ENCODE measurements at regions of chr9 and their contacts with region 1.

Region 1: GRCh38 chr9:4297151-4297785 is 2.6 kb downstream of the GLIS3 start:
- DNase-seq: peak; percentile 80
- H3K4me3 Mint-ChIP-seq: peak overlapping the region; percentile 86
- H3K27ac Mint-ChIP-seq: peak overlapping the region; percentile 86
- H3K4me1 Mint-ChIP-seq: peaks cover 42% of the 10 kb centered on the region
- H3K27me3 Mint-ChIP-seq: peaks cover 7% of the 10 kb centered on the region

Region 2: GRCh38 chr9:2849941-2850340 is 1447.3 kb before region 1 on chr9:
- CTCF ChIA-PET with region 1: no interaction called
- intact Hi-C with region 1: loop called (anchors 2 kb)
- DNase-seq: no peak
- H3K4me3 Mint-ChIP-seq: no peak overlapping the region
- H3K27ac Mint-ChIP-seq: no peak overlapping the region
- H3K4me1 Mint-ChIP-seq: peaks cover 9% of the 10 kb centered on the region
- H3K27me3 Mint-ChIP-seq: peaks cover 5% of the 10 kb centered on the region

Region 3: DNA sequence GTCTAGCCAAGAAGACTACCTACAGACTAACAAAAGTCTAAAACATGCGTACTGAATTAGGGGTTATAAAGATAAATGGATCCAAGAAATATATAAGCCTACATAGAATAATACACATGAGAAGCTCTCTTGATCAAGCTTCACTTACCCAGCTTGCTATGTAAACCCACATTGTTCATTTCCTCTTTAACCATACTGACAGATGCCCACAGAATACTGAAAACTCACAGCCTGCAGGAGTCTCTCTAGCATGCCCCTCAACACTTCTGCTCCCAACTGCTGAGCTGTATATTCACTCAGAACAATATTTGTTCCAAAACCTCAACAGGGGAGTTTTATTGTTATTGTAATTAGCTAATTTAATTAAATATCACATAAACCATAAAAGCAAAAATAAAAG is 823.9 kb before region 1 on chr9:
- CTCF ChIA-PET with region 1: no interaction called
- intact Hi-C with region 1: loop called (anchors 1 kb)
- DNase-seq: no peak
- H3K4me3 Mint-ChIP-seq: no peak overlapping the region
- H3K27ac Mint-ChIP-seq: no peak overlapping the region
- H3K4me1 Mint-ChIP-seq: peaks cover 51% of the 10 kb centered on the region
- H3K27me3 Mint-ChIP-seq: no peaks in the 10 kb centered on the region

Region 4: GRCh38 chr9:4243113-4243512 is 54.2 kb before region 1 on chr9:
- CTCF ChIA-PET with region 1: no interaction called
- intact Hi-C with region 1: loop called (anchors 2 kb)
- DNase-seq: peak; percentile 20
- H3K4me3 Mint-ChIP-seq: no peak overlapping the region
- H3K27ac Mint-ChIP-seq: peak overlapping the region; percentile 26
- H3K4me1 Mint-ChIP-seq: peaks cover 23% of the 10 kb centered on the region
- H3K27me3 Mint-ChIP-seq: no peaks in the 10 kb centered on the region

Region 5: GRCh38 chr9:4277531-4277991 is 19.7 kb before region 1 on chr9:
- CTCF ChIA-PET with region 1: no interaction called
- intact Hi-C with region 1: no loop called
- DNase-seq: no peak
- H3K4me3 Mint-ChIP-seq: no peak overlapping the region
- H3K27ac Mint-ChIP-seq: no peak overlapping the region
- H3K4me1 Mint-ChIP-seq: no peaks in the 10 kb centered on the region
- H3K27me3 Mint-ChIP-seq: peaks cover 8% of the 10 kb centered on the region

Region 6: DNA sequence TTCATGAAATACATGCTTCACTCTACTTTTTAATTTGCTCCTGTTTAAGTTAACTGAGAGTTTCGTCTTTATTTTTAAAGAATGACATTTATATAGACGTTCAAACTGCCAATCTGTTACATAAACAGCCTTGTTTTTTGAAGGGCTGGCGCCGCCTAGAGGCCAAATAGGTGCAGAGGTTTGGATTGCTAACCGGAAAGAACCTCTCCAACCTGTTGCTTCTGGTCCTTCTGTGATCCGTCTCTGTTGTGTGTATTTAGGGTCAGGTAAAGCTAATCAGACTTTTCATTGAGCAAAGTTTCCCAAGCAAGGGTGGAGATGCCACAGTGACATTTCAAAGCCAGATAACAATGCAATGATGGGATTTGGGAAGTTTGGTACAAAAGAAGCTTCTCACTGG is 42.1 kb after region 1 on chr9:
- CTCF ChIA-PET with region 1: interaction called, 9 read pairs
- intact Hi-C with region 1: loop called (anchors 1 kb)
- DNase-seq: peak; percentile 96
- H3K4me3 Mint-ChIP-seq: peak overlapping the region; percentile 51
- H3K27ac Mint-ChIP-seq: peak overlapping the region; percentile 69
- H3K4me1 Mint-ChIP-seq: peaks cover 10% of the 10 kb centered on the region
- H3K27me3 Mint-ChIP-seq: no peaks in the 10 kb centered on the region

Region 7: DNA sequence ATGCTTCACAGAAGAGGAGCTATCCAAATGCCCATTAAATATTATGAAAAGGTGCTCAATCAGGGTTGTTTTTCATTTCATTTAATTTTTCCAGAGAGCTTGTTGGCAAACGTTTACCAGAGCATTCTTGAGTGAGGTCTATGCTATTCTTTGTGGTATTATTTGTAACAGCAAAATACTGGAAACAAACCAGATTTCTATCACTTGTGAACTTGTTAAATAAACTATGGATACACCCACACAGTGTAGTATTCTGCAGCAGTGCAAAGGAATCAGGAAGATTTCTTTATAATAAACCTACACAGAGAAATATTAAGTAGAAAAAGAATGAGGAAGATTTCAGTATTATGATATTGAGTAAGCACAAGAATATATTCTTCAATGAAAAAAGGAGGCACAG is 178.0 kb after region 1 on chr9:
- CTCF ChIA-PET with region 1: no interaction called
- intact Hi-C with region 1: no loop called
- DNase-seq: no peak
- H3K4me3 Mint-ChIP-seq: no peak overlapping the region
- H3K27ac Mint-ChIP-seq: no peak overlapping the region
- H3K4me1 Mint-ChIP-seq: no peaks in the 10 kb centered on the region
- H3K27me3 Mint-ChIP-seq: no peaks in the 10 kb centered on the region

Region 8: DNA sequence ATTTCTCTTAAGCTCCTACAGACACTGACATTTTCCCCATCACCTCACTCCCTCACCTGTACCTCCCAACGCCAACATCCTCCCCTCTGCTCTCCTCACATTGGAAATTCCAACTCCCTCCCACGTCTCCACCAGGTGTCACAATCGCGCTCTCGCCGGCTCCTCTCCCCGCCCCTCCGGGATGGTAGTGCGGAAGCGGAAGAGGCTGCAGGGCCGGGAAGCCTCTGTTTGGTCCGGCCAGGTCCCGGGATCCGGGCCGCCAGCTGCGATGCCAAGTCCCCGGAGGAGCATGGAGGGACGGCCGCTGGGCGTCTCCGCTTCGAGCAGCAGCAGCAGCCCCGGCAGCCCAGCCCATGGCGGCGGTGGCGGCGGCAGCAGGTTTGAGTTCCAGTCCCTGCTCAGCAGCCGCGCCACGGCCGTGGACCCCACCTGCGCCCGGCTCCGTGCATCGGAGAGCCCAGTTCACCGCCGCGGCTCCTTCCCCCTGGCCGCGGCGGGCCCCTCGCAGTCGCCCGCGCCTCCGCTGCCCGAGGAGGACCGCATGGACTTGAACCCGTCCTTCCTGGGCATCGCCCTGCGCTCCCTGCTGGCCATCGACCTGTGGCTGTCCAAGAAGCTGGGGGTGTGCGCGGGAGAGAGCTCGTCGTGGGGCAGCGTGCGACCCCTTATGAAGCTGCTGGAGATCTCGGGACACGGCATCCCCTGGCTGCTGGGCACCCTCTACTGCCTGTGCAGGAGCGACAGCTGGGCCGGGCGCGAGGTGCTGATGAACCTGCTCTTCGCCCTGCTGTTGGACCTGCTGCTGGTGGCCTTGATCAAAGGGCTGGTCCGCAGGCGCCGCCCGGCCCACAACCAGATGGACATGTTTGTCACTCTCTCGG is 365.1 kb after region 1 on chr9 and contains the start of gene PLPP6:
- CTCF ChIA-PET with region 1: no interaction called
- intact Hi-C with region 1: loop called (anchors 5 kb)
- DNase-seq: peak; percentile 91
- H3K4me3 Mint-ChIP-seq: peak within 1 kb of the TSS; percentile 87
- H3K27ac Mint-ChIP-seq: peak within 1 kb of the TSS; percentile 77
- H3K4me1 Mint-ChIP-seq: peaks cover 52% of the 10 kb centered on the region
- H3K27me3 Mint-ChIP-seq: no peaks in the 10 kb centered on the region
- total RNA-seq, gene PLPP6: 4.6 to 5.3 TPM